Activated CD8-positive, alpha-beta T cell treated with anti-CD3 and anti-CD28 coated beads for 36 hours (primary cell): ENCODE measurements at regions of chr1 and their contacts with region 1.

Region 1: GRCh38 chr1:203702130-203702577 is 62.8 kb upstream of the LAX1 start:
- DNase-seq: peak; percentile 80
- ATAC-seq: peak; percentile 87
- H3K4me3 Mint-ChIP-seq: no peak overlapping the region
- H3K27ac Mint-ChIP-seq: peak overlapping the region; percentile 44
- H3K4me1 Mint-ChIP-seq: peaks cover 2% of the 10 kb centered on the region
- H3K27me3 Mint-ChIP-seq: no peaks in the 10 kb centered on the region
- CTCF ChIP-seq: peak; percentile 96

Region 2: DNA sequence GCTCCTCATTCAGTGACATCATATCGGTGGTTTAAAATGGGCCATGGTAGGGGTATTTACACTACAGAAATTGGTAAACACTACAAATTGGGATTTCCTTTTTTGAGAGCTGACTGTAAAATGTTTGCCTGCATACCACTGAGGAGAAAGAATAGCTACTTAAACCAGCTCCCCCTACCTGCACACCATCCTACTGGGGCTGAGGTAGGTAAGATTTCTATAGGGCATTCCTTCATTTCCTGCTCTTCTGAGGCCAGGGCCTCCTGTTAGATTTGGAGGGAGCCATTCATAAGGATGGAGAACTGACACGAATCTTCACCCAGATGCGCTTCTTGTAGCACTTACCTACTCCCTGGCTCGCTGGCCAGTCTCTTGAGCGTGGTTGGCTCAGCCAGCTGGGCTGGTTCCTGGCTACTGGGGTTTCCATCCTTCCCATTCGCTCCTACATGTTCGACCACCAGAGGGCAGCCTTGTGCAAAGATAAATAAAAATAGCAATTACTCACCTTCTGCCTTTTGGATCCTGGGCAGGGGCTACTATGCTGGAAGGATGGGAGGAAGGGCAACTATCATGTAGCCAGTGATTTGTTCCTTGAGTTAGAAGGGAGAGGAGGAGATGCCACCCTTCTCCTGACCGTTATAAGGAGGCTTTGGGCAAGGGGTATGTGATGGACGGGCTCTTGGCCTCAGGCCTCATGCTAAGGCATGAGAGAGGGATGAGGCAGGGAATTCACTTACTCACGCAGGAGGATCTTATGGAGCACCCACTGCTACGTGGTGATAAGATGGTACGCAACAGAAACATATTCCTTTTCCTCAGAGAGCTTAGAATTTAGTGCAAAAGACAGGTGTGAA is 197.5 kb before region 1 on chr1:
- CTCF ChIA-PET with region 1: interaction called, 174 read pairs
- POLR2A ChIA-PET with region 1: interaction called, 3 read pairs
- intact Hi-C with region 1: loop called (anchors 2 kb)
- DNase-seq: peak; percentile 89
- ATAC-seq: peak; percentile 81
- H3K4me3 Mint-ChIP-seq: no peak overlapping the region
- H3K27ac Mint-ChIP-seq: no peak overlapping the region
- H3K4me1 Mint-ChIP-seq: no peaks in the 10 kb centered on the region
- H3K27me3 Mint-ChIP-seq: no peaks in the 10 kb centered on the region
- CTCF ChIP-seq: peak; percentile 98

Region 3: GRCh38 chr1:203593723-203594122 is 108.4 kb before region 1 on chr1:
- CTCF ChIA-PET with region 1: interaction called, 42 read pairs
- POLR2A ChIA-PET with region 1: no interaction called
- intact Hi-C with region 1: no loop called
- DNase-seq: peak; percentile 68
- ATAC-seq: peak; percentile 94
- H3K4me3 Mint-ChIP-seq: no peak overlapping the region
- H3K27ac Mint-ChIP-seq: no peak overlapping the region
- H3K4me1 Mint-ChIP-seq: peaks cover 8% of the 10 kb centered on the region
- H3K27me3 Mint-ChIP-seq: no peaks in the 10 kb centered on the region
- CTCF ChIP-seq: no peak

Region 4: DNA sequence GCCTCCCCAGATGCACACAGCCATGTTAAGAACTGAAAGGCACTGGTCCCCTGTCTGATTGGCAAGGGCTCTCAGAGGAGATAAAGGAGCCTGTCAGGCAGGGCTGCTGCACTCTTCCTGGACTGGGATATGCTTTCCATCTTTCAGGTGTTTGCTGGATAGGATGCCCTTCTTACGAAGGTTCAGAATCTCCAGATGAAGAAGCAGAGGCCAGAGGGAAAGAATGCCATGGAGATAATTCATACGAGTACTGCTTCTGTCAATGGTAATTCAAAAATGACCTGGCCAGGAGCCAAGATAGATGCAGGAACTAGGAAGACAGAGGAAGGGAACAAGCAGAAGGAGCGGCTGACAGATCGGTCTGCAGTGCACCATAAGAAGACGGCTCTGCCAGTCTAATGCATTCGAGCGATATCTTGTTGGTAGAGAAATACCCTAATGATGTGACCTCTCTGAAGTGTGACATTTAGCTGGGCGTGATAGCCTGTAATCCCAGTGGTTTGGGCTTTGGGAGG is 92.1 kb before region 1 on chr1:
- CTCF ChIA-PET with region 1: interaction called, 20 read pairs
- POLR2A ChIA-PET with region 1: no interaction called
- intact Hi-C with region 1: no loop called
- DNase-seq: no peak
- ATAC-seq: no peak
- H3K4me3 Mint-ChIP-seq: no peak overlapping the region
- H3K27ac Mint-ChIP-seq: no peak overlapping the region
- H3K4me1 Mint-ChIP-seq: peaks cover 43% of the 10 kb centered on the region
- H3K27me3 Mint-ChIP-seq: no peaks in the 10 kb centered on the region
- CTCF ChIP-seq: no peak

Region 5: GRCh38 chr1:203649999-203650855 is 51.9 kb before region 1 on chr1:
- CTCF ChIA-PET with region 1: interaction called, 16 read pairs
- POLR2A ChIA-PET with region 1: no interaction called
- intact Hi-C with region 1: no loop called
- DNase-seq: peak; percentile 87
- ATAC-seq: peak; percentile 66
- H3K4me3 Mint-ChIP-seq: peak overlapping the region; percentile 63
- H3K27ac Mint-ChIP-seq: peak overlapping the region; percentile 94
- H3K4me1 Mint-ChIP-seq: peaks cover 68% of the 10 kb centered on the region
- H3K27me3 Mint-ChIP-seq: no peaks in the 10 kb centered on the region
- CTCF ChIP-seq: no peak

Region 6: DNA sequence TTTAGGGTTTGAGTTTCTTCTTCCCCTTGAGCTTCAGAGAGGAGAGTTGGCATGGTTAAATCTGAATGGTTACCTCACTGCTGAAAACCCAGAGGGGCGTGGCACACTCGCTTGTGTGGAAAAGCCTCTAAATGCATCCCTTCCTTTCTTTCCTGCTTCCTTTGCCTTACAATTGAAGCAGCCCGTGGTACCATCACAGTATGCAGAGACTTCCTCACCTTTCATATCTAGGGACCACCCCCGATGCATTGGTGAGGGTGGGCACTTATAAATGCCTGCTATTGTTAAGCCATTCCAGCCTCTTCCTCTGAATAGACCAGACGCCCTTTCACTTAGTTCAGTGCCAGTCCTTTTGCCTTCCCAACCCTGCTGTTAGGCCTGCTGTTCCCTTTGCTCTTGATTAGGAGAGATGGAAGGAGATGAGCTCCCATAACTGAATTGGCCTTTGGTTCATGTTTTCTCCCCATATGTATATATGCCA is 41.0 kb after region 1 on chr1:
- CTCF ChIA-PET with region 1: no interaction called
- POLR2A ChIA-PET with region 1: no interaction called
- intact Hi-C with region 1: no loop called
- DNase-seq: no peak
- ATAC-seq: no peak
- H3K4me3 Mint-ChIP-seq: no peak overlapping the region
- H3K27ac Mint-ChIP-seq: peak overlapping the region; percentile 14
- H3K4me1 Mint-ChIP-seq: peaks cover 20% of the 10 kb centered on the region
- H3K27me3 Mint-ChIP-seq: no peaks in the 10 kb centered on the region
- CTCF ChIP-seq: no peak

Region 7: GRCh38 chr1:203765029-203765837 is 63.1 kb after region 1 on chr1 and contains the start of gene LAX1:
- CTCF ChIA-PET with region 1: interaction called, 11 read pairs
- POLR2A ChIA-PET with region 1: no interaction called
- intact Hi-C with region 1: no loop called
- DNase-seq: peak; percentile 92
- ATAC-seq: peak; percentile 86
- H3K4me3 Mint-ChIP-seq: peak within 1 kb of the TSS; percentile 98
- H3K27ac Mint-ChIP-seq: peak within 1 kb of the TSS; percentile 99
- H3K4me1 Mint-ChIP-seq: peaks cover 43% of the 10 kb centered on the region
- H3K27me3 Mint-ChIP-seq: no peaks in the 10 kb centered on the region
- CTCF ChIP-seq: no peak
- total RNA-seq, gene LAX1: 20.7 to 21.1 TPM

Region 8: DNA sequence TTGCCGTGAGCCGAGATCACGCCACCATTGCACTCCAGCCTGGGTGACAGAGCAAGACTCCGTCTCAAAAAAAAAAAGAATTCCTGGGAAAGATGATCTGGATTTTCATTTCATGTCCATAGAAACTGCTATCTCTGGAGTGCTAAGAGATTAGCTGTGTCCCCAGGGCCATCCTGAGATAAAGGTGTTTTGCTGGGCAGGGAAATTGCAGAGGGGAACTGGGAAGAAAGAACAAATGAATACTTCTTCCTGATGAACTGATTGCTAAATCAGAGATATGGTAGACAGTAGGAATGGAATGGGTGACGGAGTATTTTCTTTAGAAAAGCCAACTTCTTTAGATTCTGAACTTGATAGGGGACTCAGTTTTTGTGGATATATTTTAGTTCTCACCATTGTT is 178.5 kb after region 1 on chr1:
- CTCF ChIA-PET with region 1: no interaction called
- POLR2A ChIA-PET with region 1: no interaction called
- intact Hi-C with region 1: no loop called
- DNase-seq: no peak
- ATAC-seq: no peak
- H3K4me3 Mint-ChIP-seq: no peak overlapping the region
- H3K27ac Mint-ChIP-seq: no peak overlapping the region
- H3K4me1 Mint-ChIP-seq: no peaks in the 10 kb centered on the region
- H3K27me3 Mint-ChIP-seq: no peaks in the 10 kb centered on the region
- CTCF ChIP-seq: no peak